K562 (cell line): ENCODE measurements at regions of chr19 and their contacts with region 1.

Region 1: DNA sequence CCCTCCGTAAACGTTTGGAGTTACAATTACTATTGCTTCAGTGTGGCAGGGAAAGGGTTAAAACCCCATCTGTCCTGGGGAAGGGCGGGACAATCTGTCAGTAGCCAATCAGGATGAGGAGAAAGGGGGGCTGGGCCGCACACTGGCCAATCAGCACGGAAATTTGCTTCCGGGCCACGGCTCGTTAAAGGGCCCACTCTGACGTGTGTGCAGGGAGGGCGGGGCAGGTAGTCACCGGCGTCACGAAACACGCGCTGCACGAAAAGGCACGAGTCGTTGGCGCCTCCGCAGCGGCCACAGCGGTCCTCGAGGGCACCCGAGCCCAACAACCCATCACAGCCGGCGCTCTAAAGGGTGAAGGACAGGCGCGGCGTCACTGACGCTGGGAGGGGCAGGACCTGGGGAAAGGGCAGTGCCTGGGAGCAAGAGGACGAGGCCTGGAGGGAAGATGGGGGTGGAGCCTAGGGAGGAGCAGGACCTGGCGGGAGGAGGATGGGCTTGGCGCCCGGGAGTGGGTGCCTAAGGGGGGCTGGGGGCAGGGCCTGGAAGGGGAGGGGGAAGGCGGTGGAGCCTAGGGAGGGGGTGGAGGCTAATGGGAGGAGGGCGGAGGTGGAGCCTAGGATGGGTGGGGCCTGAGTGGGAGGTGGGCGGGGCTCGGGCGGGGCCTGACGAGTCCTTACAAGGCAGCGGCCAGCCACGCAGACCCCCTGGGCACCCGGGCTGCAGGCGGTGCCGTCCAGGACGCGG is 4.9 kb downstream of the ADAMTSL5 start:
- DNase-seq: peak; percentile 97 to 100 (median 98)
- ATAC-seq: peak; percentile 90
- H3K4me3 ChIP-seq: peak overlapping the region; percentile 58
- H3K27ac ChIP-seq: peak overlapping the region; percentile 90
- H3K4me1 ChIP-seq: peaks cover 12 to 69% of the 10 kb centered on the region in 2 experiments
- H3K27me3 ChIP-seq: no peaks in the 10 kb centered on the region
- CTCF ChIP-seq: no peak; a peak in 1 of 6 replicates
- EP300 ChIP-seq: no peak
- POLR2A ChIP-seq: peak; percentile 72; the same call in 1 of the 2 replicates
- RAD21 ChIP-seq: no peak

Region 2: GRCh38 chr19:1455336-1456120 is 52.4 kb before region 1 on chr19:
- CTCF ChIA-PET with region 1: no interaction called
- POLR2A ChIA-PET with region 1: no interaction called
- in situ Hi-C with region 1: loop called (anchors 5 kb)
- intact Hi-C with region 1: loop called (anchors 5 kb)
- DNase-seq: peak; percentile 92 to 98 (median 97)
- ATAC-seq: peak; percentile 92
- H3K4me3 ChIP-seq: peak overlapping the region; percentile 39
- H3K27ac ChIP-seq: no peak overlapping the region
- H3K4me1 ChIP-seq: peaks cover 5 to 73% of the 10 kb centered on the region in 2 experiments; a peak in 4 of 5 replicates
- H3K27me3 ChIP-seq: peaks cover 0 to 9% of the 10 kb centered on the region in 2 experiments; a peak in 1 of 5 replicates
- CTCF ChIP-seq: no peak; a peak in 1 of 6 replicates
- EP300 ChIP-seq: no peak
- POLR2A ChIP-seq: peak; percentile 60; the same call in 1 of the 2 replicates
- RAD21 ChIP-seq: no peak